ENCODE measurements at regions of chr5 and their contacts with region 1.

Region 1: GRCh38 chr5:67003935-67004729 is 192.5 kb downstream of the CD180 start:
- DNase-seq: peak; percentile 89 to 93
- ATAC-seq: peak; percentile 86

Region 2: DNA sequence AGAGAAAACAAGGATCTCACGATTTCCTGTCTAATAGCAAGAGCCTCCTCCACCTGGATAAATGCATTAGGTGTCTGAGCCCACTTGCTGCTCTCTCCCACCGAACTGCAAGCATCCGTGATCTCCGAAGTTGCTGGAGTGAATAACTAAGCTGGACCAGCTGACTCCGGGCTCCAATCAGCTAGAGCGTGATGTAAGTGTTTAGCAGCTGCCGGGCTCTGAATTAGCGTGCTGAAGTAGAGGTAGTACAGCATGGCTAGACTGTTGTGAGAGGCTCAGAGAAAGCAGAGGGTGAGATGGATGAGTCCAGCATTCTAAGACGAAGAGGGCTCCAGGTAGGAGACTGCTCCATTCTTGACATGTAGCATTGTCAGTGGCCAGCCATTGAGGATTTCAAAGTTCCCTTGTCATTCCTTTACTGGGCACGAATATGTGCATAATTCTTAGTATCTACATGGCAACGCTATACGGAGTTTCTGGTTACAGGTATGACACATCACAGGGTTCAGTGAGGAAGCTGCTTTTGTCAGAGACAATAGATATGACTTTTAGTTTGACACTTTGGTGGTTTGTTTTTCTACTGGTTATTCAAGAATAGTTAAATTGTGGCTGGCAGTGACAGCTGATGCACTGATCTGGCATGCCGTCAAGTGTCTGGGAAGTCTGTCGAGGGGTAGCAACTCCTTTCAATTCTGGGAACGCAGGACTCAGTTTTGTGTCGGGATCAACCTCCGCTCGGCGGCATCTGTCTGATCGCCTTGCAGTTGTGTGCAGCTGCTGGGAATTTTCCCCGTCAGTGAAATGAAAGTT is 175.4 kb before region 1 on chr5:
- intact Hi-C with region 1: no loop called
- DNase-seq: peak; percentile 50 to 62
- ATAC-seq: peak; percentile 98

Region 3: DNA sequence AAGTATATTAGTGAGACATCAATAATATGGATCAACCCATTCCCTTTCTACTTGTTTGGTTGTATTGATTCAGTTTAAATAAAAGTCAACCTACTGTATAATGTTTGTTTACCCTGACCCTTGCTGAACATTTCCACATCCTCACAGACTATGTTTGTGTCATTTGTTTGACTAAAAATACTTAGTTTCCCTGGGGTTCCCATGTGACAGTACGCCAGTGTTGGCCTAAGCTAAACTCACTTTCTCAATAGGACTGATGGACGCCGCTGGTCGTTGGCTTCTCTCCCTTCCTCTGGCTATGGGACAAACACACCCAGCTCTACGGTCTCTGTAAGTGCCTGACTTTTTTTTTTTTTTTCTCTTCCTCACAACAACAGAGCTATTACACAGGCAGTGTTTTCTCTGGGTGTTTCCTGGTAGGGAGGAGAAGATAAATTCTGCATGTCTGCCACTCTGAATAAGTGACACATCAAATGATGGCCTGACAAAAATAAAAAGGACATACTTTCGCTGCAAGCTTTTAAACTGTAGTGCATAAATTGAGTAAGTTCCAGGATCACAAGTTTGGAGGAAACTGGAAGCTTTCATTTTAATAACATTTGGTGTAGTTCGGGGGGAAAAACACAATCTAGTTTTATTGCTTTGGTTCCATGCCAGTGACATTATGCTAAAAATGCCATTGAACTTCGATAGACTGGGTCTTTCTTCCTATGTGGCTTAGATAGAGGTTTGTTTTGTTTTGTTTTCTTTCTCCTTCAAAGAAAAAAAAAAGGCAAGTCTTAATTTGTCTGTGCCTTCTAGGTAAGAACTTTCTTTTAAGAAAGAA is 91.4 kb after region 1 on chr5:
- intact Hi-C with region 1: loop called in 1 of 2 experiments (anchors 10 kb)
- DNase-seq: peak; percentile 63 to 78
- ATAC-seq: peak; percentile 99

Region 4: GRCh38 chr5:67591491-67591890 is 587.4 kb after region 1 on chr5:
- intact Hi-C with region 1: no loop called
- DNase-seq: no peak
- ATAC-seq: no peak

Measured in left colon (tissue), 2 donors.